Activated CD4-positive, alpha-beta T cell treated with anti-CD3 and anti-CD28 coated beads for 36 hours (primary cell): ENCODE measurements at regions of chr19 and their contacts with region 1.

Region 1: DNA sequence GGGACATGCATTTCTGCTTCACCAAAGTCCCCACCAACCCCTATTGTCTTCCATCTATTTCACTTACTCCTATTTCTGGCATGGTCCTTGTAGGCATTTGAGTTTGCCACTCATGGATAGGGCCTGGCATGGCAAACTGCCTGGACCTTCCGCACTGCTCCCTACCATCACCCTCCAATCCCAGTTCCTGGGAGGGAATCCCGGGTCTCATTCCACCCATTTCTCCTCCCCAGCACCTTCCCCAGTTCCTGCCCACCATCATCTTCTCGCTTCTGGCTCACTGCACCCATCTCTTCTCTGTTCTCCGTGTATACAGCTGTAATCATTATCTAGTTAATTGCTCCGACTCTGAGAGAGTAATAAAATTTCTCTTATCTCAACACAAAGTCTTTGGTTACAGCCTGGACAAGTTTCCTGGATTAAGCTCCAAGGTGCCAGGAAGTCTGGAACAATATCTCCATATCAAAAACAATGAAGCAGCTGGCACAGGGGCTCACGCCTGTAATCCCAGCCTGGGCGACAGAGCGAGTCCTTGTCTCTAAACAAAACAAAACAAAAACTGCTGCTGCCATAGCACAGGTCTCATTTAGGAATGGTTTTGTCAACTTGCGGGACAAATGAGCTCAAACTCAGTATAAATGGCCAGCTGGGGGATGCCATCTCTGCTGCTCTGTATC is 17.0 kb upstream of the COX7A1 start:
- DNase-seq: no peak
- ATAC-seq: no peak
- H3K4me3 Mint-ChIP-seq: no peak overlapping the region
- H3K27ac Mint-ChIP-seq: no peak overlapping the region
- H3K4me1 Mint-ChIP-seq: peaks cover 4% of the 10 kb centered on the region
- H3K27me3 Mint-ChIP-seq: no peaks in the 10 kb centered on the region

Region 2: DNA sequence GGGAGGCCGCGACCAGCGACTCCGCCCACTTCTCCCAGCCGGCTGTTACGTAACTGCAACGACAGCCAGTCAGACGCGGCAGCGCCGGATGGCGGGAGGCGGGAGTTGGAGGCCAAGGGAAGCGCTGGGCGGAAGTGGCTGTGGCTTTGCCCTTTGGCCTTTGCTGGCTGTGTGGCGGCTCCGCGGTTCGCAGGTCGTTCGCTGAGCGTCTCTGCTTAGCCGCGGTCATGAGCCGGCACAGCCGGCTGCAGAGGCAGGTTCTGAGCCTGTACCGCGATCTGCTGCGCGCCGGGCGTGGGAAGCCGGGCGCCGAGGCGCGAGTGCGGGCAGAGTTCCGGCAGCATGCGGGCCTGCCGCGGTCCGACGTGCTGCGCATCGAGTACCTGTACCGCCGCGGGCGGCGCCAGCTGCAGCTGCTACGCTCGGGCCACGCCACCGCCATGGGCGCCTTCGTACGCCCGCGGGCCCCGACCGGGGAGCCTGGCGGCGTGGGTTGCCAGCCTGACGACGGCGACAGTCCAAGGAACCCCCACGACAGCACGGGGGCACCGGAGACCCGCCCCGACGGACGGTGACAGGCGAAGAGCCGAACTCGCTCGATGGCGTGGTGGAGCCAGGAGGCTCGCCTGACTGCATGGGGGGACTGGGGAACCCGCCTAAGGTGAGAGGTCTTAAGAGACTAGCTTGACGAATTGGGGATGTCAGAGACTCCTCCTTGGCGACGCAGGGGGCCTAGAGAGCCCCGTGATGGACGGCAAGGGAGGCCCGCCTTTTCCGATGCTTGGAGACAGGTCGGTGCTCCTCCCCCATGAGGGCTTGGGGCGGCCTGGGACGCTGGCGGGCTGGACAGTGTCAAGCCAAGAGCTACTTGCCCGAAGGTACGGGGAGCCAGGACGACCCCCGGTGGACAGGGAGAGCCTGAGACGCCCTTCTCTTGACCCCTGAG is 173.9 kb before region 1 on chr19 and contains the start of gene SDHAF1:
- CTCF ChIA-PET with region 1: interaction called, 3 read pairs
- POLR2A ChIA-PET with region 1: no interaction called
- intact Hi-C with region 1: loop called in 1 of 2 experiments (anchors 1 kb)
- DNase-seq: peak; percentile 98
- ATAC-seq: peak; percentile 85
- H3K4me3 Mint-ChIP-seq: peak within 1 kb of the TSS; percentile 94
- H3K27ac Mint-ChIP-seq: peak within 1 kb of the TSS; percentile 96
- H3K4me1 Mint-ChIP-seq: peaks cover 34% of the 10 kb centered on the region
- H3K27me3 Mint-ChIP-seq: no peaks in the 10 kb centered on the region
- total RNA-seq, gene SDHAF1: 16.0 to 19.2 TPM

Region 3: GRCh38 chr19:36060430-36060829 is 108.8 kb before region 1 on chr19:
- CTCF ChIA-PET with region 1: no interaction called
- POLR2A ChIA-PET with region 1: no interaction called
- intact Hi-C with region 1: loop called (anchors 2 to 5 kb)
- DNase-seq: peak; percentile 54
- ATAC-seq: peak; percentile 53
- H3K4me3 Mint-ChIP-seq: no peak overlapping the region
- H3K27ac Mint-ChIP-seq: no peak overlapping the region
- H3K4me1 Mint-ChIP-seq: peaks cover 7% of the 10 kb centered on the region
- H3K27me3 Mint-ChIP-seq: no peaks in the 10 kb centered on the region

Region 4: GRCh38 chr19:36132489-36132891 is 36.7 kb before region 1 on chr19:
- CTCF ChIA-PET with region 1: interaction called, 59 read pairs
- POLR2A ChIA-PET with region 1: interaction called, 3 read pairs
- intact Hi-C with region 1: loop called (anchors 1 kb)
- DNase-seq: peak; percentile 74
- ATAC-seq: peak; percentile 77
- H3K4me3 Mint-ChIP-seq: no peak overlapping the region
- H3K27ac Mint-ChIP-seq: peak overlapping the region; percentile 80
- H3K4me1 Mint-ChIP-seq: peaks cover 33% of the 10 kb centered on the region
- H3K27me3 Mint-ChIP-seq: no peaks in the 10 kb centered on the region